ENCODE measurements at regions of chr20 and their contacts with region 1.

Region 1: DNA sequence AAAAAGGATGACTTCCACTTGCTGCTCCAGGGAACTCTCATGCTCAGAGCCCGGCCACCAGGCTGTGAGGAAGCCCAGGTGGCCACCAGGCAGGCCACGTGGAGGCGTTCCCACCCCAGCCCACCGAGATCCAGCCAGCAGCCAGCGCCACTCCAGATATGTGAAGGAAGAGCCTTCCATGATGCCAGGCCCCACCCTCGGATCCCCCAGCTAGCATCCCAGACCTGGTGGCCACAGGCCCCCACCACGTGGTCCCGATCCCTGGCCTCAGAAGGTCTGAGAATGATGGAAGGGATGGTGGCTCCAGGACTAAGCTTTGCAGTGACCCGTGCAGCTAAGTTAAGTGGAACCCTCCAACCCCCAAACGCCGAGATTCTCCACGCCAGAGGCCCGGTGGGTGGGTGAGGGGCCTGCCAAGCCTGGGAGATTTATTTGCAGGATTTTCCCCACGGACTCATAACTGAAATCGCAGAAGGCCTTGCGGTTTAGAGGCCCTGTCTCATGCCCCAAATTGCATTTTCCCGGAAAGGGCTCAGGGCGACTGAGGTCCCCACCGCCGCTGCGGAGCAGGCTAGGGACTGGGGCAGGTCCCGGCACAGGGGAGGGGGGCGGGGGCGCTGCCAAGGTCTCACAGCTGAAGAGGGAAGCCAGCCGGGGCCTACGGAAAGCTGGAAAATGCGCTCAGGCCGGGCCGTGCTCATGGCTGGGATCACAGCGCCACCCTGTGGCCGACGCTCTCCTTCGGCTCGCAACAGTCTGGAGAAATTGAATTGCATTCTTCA is 31.1 kb upstream of the CST7 start:
- DNase-seq: peak; percentile 50
- H3K4me3 ChIP-seq: no peak overlapping the region
- H3K27ac ChIP-seq: no peak overlapping the region
- H3K4me1 ChIP-seq: no peaks in the 10 kb centered on the region
- CTCF ChIP-seq: peak; percentile 89

Region 2: DNA sequence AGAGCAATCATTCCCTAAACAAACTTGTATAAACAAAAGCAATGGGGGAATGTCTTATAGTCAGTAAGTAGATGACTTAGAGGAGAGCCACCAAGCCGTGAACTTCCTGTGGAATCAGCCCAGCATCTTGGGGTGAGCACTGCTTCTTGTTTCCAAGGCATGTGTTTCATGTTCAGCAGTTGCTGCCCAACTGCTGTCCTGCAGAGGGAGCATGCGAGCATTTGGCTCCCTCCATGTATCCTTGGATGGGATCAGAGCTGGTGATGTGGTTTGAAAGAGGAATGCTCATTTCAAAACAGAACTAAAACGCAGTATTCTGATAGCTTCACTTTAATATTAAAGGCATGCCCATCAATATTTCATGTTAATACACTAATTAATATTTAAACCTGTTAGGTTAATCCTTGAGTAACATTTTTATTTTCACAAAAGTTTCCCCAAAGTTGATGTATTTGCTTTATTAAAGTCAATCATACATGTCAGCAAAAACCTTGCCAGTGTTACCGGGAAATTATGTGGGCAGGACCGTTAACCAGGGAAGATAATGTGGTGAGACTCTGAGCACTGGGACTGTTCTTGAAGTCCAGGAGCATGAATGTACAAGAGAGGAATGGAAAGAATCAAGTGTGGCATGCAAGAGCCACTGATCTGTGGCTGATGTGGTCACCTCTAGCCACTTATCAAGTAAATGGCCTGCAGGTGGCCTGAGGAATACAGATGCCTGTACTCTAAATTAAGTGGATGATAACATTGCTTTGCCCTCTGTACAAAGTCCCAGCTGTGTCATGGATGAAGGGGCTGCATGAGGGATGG is 757.2 kb before region 1 on chr20:
- CTCF ChIA-PET with region 1: no interaction called
- POLR2A ChIA-PET with region 1: no interaction called
- intact Hi-C with region 1: loop called (anchors 5 kb)
- DNase-seq: peak; percentile 10
- H3K4me3 ChIP-seq: no peak overlapping the region
- H3K27ac ChIP-seq: no peak overlapping the region
- H3K4me1 ChIP-seq: no peaks in the 10 kb centered on the region
- CTCF ChIP-seq: peak; percentile 74

Region 3: DNA sequence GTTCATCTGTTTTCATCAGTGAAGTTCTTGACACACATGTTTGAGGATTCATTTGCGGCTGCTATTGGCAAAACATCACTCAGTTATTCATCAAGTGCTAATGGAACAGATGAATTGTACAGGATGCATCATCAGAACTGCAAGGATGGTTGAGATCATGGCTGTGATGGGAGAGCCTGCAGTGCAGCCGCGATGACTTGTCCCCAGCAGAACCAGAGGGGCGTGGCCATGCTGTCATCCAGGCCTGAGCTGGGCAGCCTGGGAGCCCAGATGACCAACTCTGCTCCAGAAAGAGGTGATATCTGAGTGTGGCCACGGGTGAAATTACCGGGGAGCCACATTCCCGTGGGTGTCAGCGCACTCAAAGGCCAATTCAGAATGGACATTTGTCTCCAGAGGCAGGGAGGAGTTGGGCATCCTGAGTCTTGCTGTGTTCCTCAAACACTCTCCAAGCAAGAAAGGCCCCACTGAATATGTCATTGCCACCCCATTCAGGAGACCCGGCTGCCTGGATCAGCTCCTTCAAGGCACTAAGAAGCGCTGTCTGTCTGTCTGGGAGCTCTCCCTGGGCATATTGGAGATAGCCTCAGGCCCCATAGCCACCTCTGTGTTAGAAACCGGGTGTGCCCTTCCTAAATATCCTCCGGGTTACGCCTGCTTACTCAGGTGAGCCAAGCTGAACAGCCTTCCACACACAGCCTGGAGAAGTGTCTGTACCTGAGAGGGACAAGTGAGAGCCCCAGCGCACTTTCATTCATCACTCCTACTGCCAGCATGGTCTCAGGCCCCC is 381.9 kb before region 1 on chr20:
- CTCF ChIA-PET with region 1: no interaction called
- POLR2A ChIA-PET with region 1: no interaction called
- intact Hi-C with region 1: loop called (anchors 5 kb)
- DNase-seq: no peak
- H3K4me3 ChIP-seq: no peak overlapping the region
- H3K27ac ChIP-seq: no peak overlapping the region
- H3K4me1 ChIP-seq: no peaks in the 10 kb centered on the region
- CTCF ChIP-seq: no peak

Region 4: DNA sequence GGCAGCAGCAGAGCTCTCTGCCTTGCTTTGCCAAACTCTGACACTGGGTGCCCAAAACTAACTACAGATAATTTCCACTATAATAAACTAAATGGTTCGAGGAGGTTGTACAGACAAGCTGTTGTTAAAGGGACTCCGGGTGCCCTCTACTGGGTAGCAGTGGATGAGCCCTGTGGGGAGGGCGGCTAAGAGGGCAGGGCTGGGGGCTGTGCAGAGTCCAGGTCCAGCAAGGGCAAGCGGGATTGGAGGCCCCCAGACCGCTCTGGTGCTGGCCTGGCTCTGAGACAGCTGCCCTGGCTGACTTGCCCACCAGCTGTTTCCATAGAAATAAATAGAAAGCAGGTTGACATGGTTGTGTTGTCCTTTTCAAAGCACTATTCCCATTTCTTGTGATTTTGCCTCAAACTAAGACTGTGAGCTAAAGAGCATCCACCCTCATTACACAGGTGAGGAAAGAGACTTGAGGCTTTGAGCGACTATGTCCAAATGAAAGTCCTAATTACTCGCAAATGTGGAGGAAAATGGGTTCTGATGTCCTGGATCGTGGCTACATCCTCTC is 136.5 kb before region 1 on chr20:
- CTCF ChIA-PET with region 1: interaction called, 7 read pairs
- POLR2A ChIA-PET with region 1: no interaction called
- intact Hi-C with region 1: loop called (anchors 1 kb)
- DNase-seq: peak; percentile 45
- H3K4me3 ChIP-seq: no peak overlapping the region
- H3K27ac ChIP-seq: no peak overlapping the region
- H3K4me1 ChIP-seq: peaks cover 7% of the 10 kb centered on the region
- CTCF ChIP-seq: peak; percentile 72

Region 5: DNA sequence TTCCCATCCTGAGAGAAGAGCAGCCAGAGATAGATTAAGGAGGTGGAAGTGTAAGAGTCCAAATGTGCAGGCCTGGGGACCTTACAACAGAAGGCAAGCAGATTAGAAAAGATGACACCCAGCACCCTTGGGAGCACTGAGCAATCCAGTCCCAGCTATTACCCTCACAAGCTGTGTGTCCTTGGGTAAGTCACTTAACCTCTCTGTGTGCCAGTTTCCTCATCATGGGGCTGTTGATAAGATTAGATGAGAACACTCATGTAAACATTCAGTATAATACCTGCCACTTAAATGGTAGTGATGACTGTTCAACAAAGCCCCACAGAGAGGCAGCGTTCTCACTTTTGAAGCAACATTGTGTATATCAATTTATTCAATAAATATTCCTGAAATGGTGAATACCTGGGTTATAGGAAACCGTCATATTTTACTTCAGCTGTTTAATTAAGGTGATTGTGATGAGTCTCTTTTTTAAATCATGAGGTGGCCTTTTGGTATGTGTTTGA is 83.6 kb before region 1 on chr20:
- CTCF ChIA-PET with region 1: no interaction called
- POLR2A ChIA-PET with region 1: no interaction called
- intact Hi-C with region 1: loop called (anchors 2 kb)
- DNase-seq: no peak
- H3K4me3 ChIP-seq: no peak overlapping the region
- H3K27ac ChIP-seq: no peak overlapping the region
- H3K4me1 ChIP-seq: no peaks in the 10 kb centered on the region
- CTCF ChIP-seq: no peak

Region 6: GRCh38 chr20:24872291-24873024 is 45.5 kb before region 1 on chr20:
- CTCF ChIA-PET with region 1: no interaction called
- POLR2A ChIA-PET with region 1: no interaction called
- intact Hi-C with region 1: loop called (anchors 5 kb)
- DNase-seq: peak; percentile 21
- H3K4me3 ChIP-seq: no peak overlapping the region
- H3K27ac ChIP-seq: no peak overlapping the region
- H3K4me1 ChIP-seq: no peaks in the 10 kb centered on the region
- CTCF ChIP-seq: no peak